ENCODE measurements at regions of chr21 and their contacts with region 1.

Region 1: GRCh38 chr21:41425954-41426675 is at the start of gene MX1:
- DNase-seq: peak in 1 of 2 experiments; percentile 57
- H3K4me3 ChIP-seq: no peak within 1 kb of the TSS
- H3K27ac ChIP-seq: no peak within 1 kb of the TSS
- H3K4me1 ChIP-seq: no peaks in the 10 kb centered on the region
- H3K27me3 ChIP-seq: no peaks in the 10 kb centered on the region
- CTCF ChIP-seq: no peak
- total RNA-seq, gene MX1: 6.4 and 10.7 TPM in 2 replicates

Region 2: GRCh38 chr21:41366522-41367151 is 59.5 kb before region 1 on chr21:
- CTCF ChIA-PET with region 1: no interaction called
- POLR2A ChIA-PET with region 1: no interaction called
- intact Hi-C with region 1: loop called (anchors 2 kb)
- DNase-seq: peak; percentile 83 to 94
- H3K4me3 ChIP-seq: peak overlapping the region; percentile 31; the same call in 1 of the 2 replicates
- H3K27ac ChIP-seq: peak overlapping the region; percentile 83
- H3K4me1 ChIP-seq: peaks cover 23% of the 10 kb centered on the region
- H3K27me3 ChIP-seq: no peaks in the 10 kb centered on the region
- CTCF ChIP-seq: no peak

Region 3: GRCh38 chr21:41460578-41461527 is 34.7 kb after region 1 on chr21:
- CTCF ChIA-PET with region 1: no interaction called
- POLR2A ChIA-PET with region 1: no interaction called
- intact Hi-C with region 1: loop called (anchors 2 kb)
- DNase-seq: peak in 1 of 2 experiments; percentile 56
- H3K4me3 ChIP-seq: no peak overlapping the region
- H3K27ac ChIP-seq: no peak overlapping the region
- H3K4me1 ChIP-seq: no peaks in the 10 kb centered on the region
- H3K27me3 ChIP-seq: no peaks in the 10 kb centered on the region
- CTCF ChIP-seq: peak; percentile 74

Region 4: DNA sequence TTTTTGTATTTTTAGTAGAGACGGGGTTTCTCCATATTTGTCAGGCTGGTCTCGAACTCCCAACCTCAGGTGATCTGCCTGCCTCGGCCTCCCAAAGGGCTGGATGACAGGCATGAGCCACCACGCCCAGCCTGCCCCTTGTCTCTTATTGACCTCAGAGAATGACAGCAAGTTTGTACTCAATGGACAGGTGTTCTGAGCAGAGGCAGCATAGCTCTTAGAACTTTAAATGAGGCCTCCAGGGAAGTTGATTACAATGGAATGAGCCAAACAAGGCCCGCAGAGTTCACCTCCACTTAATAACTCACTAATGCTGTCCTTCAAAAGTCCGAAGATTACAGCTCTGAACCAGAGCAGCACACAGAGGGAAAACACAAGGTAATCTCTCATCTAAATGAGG is 70.9 kb after region 1 on chr21:
- CTCF ChIA-PET with region 1: no interaction called
- POLR2A ChIA-PET with region 1: no interaction called
- intact Hi-C with region 1: no loop called
- DNase-seq: no peak
- H3K4me3 ChIP-seq: no peak overlapping the region
- H3K27ac ChIP-seq: no peak overlapping the region
- H3K4me1 ChIP-seq: no peaks in the 10 kb centered on the region
- H3K27me3 ChIP-seq: no peaks in the 10 kb centered on the region
- CTCF ChIP-seq: no peak

Measured in PC-9 (cell line).